Activated CD4-positive, alpha-beta T cell treated with anti-CD3 and anti-CD28 coated beads, Interleukin-2, amount 10 ng/mL, durations not matched to agents 24 days and 14 days (primary cell): ENCODE measurements at regions of chr2 and their contacts with region 1.

Region 1: GRCh38 chr2:219177552-219178376 is at the start of gene RETREG2:
- DNase-seq: peak; percentile 93
- H3K4me3 Mint-ChIP-seq: peak within 1 kb of the TSS; percentile 94
- H3K27ac Mint-ChIP-seq: peak within 1 kb of the TSS; percentile 99
- H3K4me1 Mint-ChIP-seq: peaks cover 62% of the 10 kb centered on the region
- H3K27me3 Mint-ChIP-seq: no peaks in the 10 kb centered on the region
- total RNA-seq, gene RETREG2: 54.1 and 57.4 TPM in 2 replicates

Region 2: DNA sequence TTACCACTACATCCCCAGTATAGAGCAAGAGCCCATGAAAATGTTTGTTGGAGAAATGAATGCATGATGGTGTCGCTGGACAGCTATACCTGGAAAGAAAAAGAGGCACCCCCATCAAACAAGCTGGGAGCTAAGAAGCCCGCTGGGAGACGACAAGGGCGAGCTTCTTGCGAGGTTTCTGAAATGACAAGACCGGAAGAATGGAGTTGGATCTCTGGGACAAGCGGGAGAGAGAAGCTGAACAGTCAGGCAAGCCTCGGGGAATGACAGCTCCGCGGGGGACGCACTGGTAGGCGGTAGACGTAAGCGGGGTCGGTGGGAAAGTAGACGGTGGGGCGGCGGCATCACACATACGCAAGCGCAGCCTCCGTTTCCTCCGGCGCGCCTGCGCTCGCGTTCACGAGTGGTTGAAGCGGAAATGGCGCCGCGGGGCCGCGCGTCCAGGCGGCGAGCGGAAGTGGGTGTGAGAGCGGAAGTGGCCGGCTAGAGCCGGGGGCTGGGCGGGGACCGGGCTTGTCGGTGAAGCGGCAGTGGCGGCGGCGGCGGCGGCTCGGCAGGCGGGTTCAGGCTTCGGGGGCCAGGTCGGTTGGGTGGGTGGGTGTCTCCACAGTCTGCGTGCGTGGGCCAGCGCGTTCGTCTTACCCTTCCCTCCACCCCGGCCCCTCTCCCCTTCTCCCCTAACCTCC is 960.9 kb before region 1 on chr2 and contains the start of gene ARPC2:
- intact Hi-C with region 1: loop called (anchors 5 kb)
- DNase-seq: peak; percentile 99
- H3K4me3 Mint-ChIP-seq: peak within 1 kb of the TSS; percentile 89
- H3K27ac Mint-ChIP-seq: peak within 1 kb of the TSS; percentile 94
- H3K4me1 Mint-ChIP-seq: peaks cover 37% of the 10 kb centered on the region
- H3K27me3 Mint-ChIP-seq: peaks cover 4% of the 10 kb centered on the region
- total RNA-seq, gene ARPC2: 515 and 516 TPM in 2 replicates

Region 3: DNA sequence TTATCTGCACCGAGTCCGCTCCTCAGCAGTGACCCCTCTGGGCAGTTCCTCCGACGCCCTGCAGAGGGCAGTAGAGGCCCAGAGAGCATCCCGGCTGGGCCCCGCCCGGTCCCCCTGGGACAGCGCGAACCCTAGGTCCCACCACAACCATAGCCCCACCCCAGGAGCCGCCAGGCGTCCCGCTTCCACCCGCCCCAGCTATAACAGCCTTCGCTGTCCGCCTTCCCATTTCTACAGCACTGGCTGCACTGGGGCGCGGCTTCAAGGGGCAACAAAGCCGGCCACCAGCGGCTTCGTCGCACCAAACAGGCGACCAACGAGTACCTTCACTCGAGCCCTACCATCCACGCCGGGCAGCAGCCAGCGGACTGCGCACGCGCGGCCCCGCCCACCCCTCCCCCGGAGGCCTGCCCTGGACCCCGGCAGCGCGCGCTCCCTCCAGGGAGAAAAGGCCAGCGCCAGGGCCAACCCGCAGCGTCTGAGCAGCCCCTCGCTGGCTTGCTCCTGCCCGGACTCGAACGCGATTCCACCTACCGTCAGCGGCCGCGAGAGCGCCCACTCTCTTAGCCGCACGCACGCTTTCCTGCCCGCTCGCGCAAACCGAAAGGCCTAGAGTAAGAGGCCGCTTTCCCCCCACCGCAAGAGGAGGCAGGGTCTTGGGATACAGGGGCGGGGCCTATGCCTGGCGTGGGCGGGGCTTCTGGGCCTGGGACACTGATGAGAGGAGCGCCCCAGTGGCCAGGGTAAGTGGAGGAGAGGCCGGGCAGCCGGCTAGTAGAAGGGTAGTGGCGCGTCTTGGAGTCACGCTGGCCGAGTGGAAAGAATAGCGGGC is 17.4 kb before region 1 on chr2 and contains the start of gene NHEJ1:
- intact Hi-C with region 1: loop called (anchors 1 kb)
- DNase-seq: peak; percentile 98
- H3K4me3 Mint-ChIP-seq: peak within 1 kb of the TSS; percentile 88
- H3K27ac Mint-ChIP-seq: peak within 1 kb of the TSS; percentile 97
- H3K4me1 Mint-ChIP-seq: peaks cover 20% of the 10 kb centered on the region
- H3K27me3 Mint-ChIP-seq: no peaks in the 10 kb centered on the region
- total RNA-seq, gene NHEJ1: 20.7 and 22.8 TPM in 2 replicates

Region 4: DNA sequence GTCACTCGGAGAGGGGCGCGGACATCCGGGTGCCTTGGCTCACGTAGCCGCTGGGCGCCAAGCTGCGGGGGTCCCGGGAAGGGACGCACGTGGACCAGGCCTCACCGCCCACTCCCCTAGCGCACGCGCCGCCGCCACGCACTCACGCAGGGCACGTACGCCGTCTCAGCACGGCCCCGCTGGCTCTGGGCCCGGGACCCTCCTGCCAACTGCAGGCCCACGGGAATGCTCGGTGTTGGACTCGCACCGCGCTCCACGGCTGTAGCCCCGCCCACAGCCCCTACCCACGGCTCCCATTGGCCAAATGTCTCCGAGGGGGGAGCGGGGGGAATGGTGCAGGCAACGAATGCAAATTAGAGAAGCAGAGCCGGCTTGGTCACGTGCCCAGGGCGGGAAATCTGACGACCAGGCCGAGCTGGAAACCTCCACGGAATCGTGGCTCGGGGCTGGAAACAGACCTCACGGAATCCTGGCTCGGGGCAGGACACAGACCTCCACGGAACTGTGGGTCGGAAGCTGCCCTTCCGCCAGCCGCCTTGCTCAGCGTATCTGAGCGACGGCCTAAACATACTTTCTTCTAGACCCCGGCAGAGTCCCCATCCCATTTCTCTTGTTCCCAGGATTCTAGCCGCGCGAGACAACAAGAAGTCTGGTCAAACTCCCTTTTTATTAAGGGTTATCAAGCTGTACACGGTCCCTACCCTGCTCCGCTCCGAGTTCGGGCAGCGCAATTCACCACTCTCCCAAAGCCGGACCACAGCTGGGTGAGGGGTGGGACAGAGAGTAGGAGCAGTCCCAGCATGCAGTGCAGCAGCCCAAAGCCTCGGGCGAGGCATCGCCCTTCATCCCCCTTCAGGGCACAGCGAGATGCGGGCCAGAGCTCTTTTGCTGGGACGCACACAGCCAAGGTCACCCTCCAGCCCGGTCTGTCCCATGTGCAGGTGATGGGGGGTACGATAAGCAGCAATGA is 41.3 kb after region 1 on chr2 and contains the start of gene ABCB6:
- intact Hi-C with region 1: loop called (anchors 1 kb)
- DNase-seq: peak; percentile 96
- H3K4me3 Mint-ChIP-seq: peak within 1 kb of the TSS; percentile 91
- H3K27ac Mint-ChIP-seq: peak within 1 kb of the TSS; percentile 81
- H3K4me1 Mint-ChIP-seq: peaks cover 24% of the 10 kb centered on the region
- H3K27me3 Mint-ChIP-seq: no peaks in the 10 kb centered on the region
- total RNA-seq, gene ABCB6: 28.8 TPM in 2 replicates

Region 5: GRCh38 chr2:219253753-219254590 is 76.2 kb after region 1 on chr2 and contains the start of gene TUBA4A:
- intact Hi-C with region 1: loop called (anchors 1 kb)
- DNase-seq: peak; percentile 97
- H3K4me3 Mint-ChIP-seq: peak within 1 kb of the TSS; percentile 80
- H3K27ac Mint-ChIP-seq: peak within 1 kb of the TSS; percentile 91
- H3K4me1 Mint-ChIP-seq: peaks cover 47% of the 10 kb centered on the region
- H3K27me3 Mint-ChIP-seq: no peaks in the 10 kb centered on the region
- total RNA-seq, gene TUBA4A: 235 and 240 TPM in 2 replicates

Region 6: GRCh38 chr2:219294356-219295351 is 116.9 kb after region 1 on chr2:
- intact Hi-C with region 1: loop called (anchors 2 kb)
- DNase-seq: peak; percentile 97
- H3K4me3 Mint-ChIP-seq: peak overlapping the region; percentile 84
- H3K27ac Mint-ChIP-seq: peak overlapping the region; percentile 97
- H3K4me1 Mint-ChIP-seq: peaks cover 17% of the 10 kb centered on the region
- H3K27me3 Mint-ChIP-seq: peaks cover 6% of the 10 kb centered on the region